Activated CD4-positive, alpha-beta T cell treated with anti-CD3 and anti-CD28 coated beads for 36 hours (primary cell): ENCODE measurements at regions of chrX and their contacts with region 1.

Region 1: GRCh38 chrX:136588041-136588788 is 56.2 kb downstream of the VGLL1 start:
- DNase-seq: no peak
- ATAC-seq: peak; percentile 59
- H3K4me3 Mint-ChIP-seq: peak overlapping the region; percentile 32
- H3K27ac Mint-ChIP-seq: peak overlapping the region; percentile 85
- H3K4me1 Mint-ChIP-seq: peaks cover 64% of the 10 kb centered on the region
- H3K27me3 Mint-ChIP-seq: no peaks in the 10 kb centered on the region

Region 2: DNA sequence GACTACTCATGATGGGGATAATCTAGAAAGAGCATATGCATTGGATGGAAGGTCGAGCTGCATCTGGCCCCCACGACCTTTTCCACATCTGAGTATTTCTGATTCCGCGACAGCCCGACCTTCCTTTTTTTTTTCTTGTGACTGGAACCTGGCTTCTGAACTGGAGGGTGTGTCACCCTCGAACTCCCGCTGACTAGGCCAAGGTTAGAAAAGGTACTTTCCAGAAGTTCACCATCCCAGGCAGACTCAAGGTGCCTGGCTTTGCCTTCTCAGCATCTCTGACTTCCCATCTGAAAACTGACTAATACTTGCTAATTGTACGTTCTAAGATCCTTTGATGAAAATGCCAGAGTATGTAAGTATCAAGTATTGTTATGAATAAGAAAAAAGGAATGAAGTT is 10.4 kb after region 1 on chrX:
- CTCF ChIA-PET with region 1: interaction called, 7 read pairs
- POLR2A ChIA-PET with region 1: interaction called, 7 read pairs
- intact Hi-C with region 1: loop called (anchors 1 to 2 kb)
- DNase-seq: peak; percentile 58
- ATAC-seq: peak; percentile 86
- H3K4me3 Mint-ChIP-seq: peak overlapping the region; percentile 35
- H3K27ac Mint-ChIP-seq: peak overlapping the region; percentile 88
- H3K4me1 Mint-ChIP-seq: peaks cover 52% of the 10 kb centered on the region
- H3K27me3 Mint-ChIP-seq: no peaks in the 10 kb centered on the region

Region 3: DNA sequence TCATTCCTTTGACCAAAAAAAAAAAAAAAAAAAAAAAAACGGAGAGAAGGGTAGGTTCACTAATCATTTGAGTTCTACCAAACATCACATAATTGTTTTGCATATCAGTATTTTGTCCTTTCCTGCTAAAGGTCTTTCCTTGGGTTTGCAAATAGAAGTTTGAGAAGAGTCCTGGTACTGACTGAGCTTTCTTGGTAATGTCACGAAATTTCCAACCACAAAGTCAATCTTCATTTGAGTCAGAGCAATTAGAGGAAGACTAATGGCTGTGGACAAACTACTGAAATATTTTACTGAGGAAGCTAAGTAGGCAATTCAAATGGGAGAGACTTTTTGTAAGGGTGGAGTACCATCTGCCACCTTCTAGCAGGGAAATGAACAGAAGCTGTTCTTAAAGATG is 38.0 kb after region 1 on chrX:
- CTCF ChIA-PET with region 1: no interaction called
- POLR2A ChIA-PET with region 1: interaction called, 3 read pairs
- intact Hi-C with region 1: loop called (anchors 1 to 2 kb)
- DNase-seq: no peak
- ATAC-seq: peak; percentile 20
- H3K4me3 Mint-ChIP-seq: no peak overlapping the region
- H3K27ac Mint-ChIP-seq: peak overlapping the region; percentile 93
- H3K4me1 Mint-ChIP-seq: peaks cover 92% of the 10 kb centered on the region
- H3K27me3 Mint-ChIP-seq: no peaks in the 10 kb centered on the region

Region 4: DNA sequence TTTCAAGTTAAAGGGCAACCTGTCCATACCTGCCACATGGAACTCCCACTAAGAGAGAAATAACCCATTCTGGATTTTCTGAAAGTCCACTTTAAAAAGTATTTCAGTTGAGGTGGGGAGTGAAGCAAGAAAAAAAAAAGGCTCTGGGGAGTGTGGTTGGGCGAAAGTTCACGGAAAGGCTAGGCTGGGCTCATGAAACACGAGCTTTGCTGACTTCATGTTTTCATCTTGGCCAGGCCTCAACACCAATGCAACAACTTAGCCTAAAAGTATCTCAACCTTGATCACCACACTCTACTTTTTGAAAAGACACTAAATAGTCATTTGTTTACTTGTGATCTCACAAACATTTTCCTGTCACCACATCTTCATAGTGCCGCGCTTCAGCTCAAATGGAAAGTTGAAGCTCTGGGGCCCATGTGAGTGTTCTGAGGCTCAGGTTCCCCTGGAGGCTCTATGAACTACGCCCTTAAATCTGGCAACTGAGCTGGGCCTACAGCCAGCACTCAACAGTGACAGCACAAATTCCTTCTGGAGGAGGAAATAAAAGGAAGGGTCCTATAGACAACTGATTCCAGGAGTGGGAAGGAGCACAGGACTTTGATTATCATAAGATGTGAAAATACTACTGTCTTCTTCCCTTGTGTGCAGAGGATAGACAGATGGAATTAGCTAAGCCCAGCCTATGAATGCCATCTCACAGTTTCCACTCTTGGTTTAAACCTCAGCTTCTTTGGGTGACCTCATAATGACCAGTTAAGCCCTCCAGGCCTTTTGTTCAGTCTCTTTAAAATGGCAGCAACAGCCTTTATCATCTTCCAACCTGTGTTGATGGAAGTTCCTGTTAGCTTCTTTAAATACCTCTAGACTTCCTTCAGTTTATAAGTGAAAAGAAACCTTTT is 64.9 kb after region 1 on chrX:
- CTCF ChIA-PET with region 1: interaction called, 3 read pairs
- POLR2A ChIA-PET with region 1: interaction called, 5 read pairs
- intact Hi-C with region 1: loop called in 1 of 2 experiments (anchors 5 kb)
- DNase-seq: peak; percentile 61
- ATAC-seq: peak; percentile 56
- H3K4me3 Mint-ChIP-seq: peak overlapping the region; percentile 96
- H3K27ac Mint-ChIP-seq: peak overlapping the region; percentile 100
- H3K4me1 Mint-ChIP-seq: peaks cover 43% of the 10 kb centered on the region
- H3K27me3 Mint-ChIP-seq: no peaks in the 10 kb centered on the region

Region 5: DNA sequence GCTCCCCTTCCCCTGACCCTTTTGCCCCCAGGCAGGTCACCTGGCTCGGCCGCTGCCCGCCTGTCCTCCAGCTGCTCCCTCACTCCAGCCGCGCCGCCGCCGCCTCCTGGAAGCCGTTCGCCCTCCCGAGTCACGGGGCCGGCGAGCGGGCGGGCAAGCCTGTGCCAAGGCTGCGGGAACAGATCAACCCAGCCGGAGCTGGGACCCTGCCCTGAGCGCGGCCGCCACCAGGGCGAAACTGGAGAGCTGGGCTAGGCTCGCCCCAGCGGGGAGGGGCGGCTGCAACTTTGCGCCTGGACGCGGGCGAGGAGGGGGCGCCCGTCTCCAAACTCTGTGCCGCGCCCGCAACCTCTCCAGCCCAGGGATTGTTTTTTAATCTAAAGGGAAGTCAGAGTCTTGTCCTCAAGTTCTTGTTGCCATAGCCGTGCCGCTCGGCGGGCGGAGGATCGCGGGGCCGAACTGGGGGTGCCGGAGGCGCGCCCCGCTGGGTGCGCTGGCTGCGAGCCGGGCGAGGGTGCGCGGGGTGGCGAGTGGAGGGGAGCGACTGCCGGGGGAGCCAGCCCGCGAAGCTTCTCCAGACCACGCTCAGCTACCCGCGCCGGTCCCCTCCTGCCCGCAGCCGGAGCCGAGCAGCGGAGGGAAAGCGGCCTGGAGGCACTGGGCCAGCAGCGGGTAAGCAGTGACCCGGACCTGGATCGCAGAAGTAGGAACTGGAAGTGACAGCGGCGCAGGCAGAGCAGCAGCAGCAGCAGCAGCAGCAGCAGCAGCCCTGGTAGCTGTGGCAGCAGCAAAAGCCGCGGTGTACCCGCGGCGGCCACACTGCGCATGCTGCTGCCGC is 179.1 kb after region 1 on chrX:
- CTCF ChIA-PET with region 1: no interaction called
- POLR2A ChIA-PET with region 1: no interaction called
- intact Hi-C with region 1: loop called in 1 of 2 experiments (anchors 5 kb)
- DNase-seq: peak; percentile 65
- ATAC-seq: peak; percentile 39
- H3K4me3 Mint-ChIP-seq: peak overlapping the region; percentile 73
- H3K27ac Mint-ChIP-seq: peak overlapping the region; percentile 85
- H3K4me1 Mint-ChIP-seq: peaks cover 59% of the 10 kb centered on the region
- H3K27me3 Mint-ChIP-seq: no peaks in the 10 kb centered on the region

Region 6: DNA sequence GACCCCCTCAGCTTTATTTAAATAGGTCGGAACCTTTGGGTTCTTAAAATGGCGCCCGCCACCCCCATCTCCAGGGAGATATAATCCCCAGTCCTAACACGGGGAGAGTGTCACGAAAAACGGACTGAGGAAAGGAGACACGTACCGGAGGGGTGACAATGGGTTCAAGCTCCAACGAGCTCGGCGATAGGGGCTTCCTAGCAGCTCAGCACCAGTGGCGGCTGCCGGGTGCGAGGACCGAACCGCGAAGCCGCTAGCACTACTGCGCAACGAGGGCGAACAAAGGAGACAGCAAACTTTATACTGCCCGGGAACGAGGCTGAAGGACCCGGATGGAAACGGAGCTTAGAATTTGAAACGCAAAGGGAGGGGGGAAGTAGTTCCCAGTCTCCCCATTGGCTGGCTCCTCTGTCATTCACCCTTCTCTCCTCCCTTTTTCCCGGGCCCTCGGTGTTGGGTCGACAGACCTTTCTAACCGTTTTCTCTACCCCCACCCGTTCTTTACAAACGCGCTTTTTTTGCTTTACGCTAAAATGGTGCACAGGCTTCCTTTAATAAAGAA is 292.3 kb after region 1 on chrX and contains the start of gene RBMX:
- CTCF ChIA-PET with region 1: no interaction called
- POLR2A ChIA-PET with region 1: no interaction called
- intact Hi-C with region 1: loop called in 1 of 2 experiments (anchors 10 kb)
- DNase-seq: peak; percentile 92
- ATAC-seq: peak; percentile 93
- H3K4me3 Mint-ChIP-seq: peak within 1 kb of the TSS; percentile 100
- H3K27ac Mint-ChIP-seq: peak within 1 kb of the TSS; percentile 100
- H3K4me1 Mint-ChIP-seq: peaks cover 19% of the 10 kb centered on the region
- H3K27me3 Mint-ChIP-seq: no peaks in the 10 kb centered on the region
- total RNA-seq, gene RBMX: 320 to 414 TPM

Region 7: DNA sequence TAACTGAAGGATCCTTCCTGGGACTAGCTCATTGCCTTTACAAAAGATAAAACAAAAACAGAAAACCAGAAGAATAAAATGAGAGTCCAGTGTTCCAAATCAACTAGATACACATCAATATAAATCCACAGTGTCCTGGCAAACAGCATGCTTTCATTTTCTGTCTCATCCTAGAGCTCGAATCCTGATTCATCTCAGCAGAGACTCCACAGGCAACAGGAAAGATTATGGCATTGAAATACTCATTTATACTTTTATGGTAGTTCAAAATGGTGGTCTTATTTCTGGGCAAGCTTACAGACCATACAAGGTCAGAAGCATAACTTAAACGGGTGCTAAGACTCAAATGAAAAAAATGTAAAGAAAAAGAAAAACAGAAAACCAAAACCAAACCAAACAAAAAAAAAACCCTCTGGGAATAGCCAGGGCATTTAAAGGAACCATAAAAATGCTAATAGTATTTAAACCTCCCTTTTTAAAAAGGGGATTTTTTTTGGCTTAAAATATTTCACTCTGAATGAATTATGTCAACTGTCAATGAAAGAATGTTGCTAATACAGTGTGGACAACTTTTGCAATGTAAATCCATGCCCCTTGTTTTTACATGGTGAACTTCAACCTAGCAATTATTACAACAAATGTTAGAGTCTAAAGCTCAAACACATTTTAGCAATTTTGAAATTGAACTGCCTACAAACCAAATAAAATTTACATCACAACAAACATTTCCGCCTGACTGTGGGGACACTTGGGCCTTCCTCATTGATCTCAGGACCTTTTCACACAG is 387.7 kb after region 1 on chrX:
- CTCF ChIA-PET with region 1: no interaction called
- POLR2A ChIA-PET with region 1: no interaction called
- intact Hi-C with region 1: no loop called
- DNase-seq: no peak
- ATAC-seq: no peak
- H3K4me3 Mint-ChIP-seq: no peak overlapping the region
- H3K27ac Mint-ChIP-seq: no peak overlapping the region
- H3K4me1 Mint-ChIP-seq: no peaks in the 10 kb centered on the region
- H3K27me3 Mint-ChIP-seq: no peaks in the 10 kb centered on the region